Colonic mucosa (tissue), 4 donors: ENCODE measurements at regions of chr2 and their contacts with region 1.

Region 1: DNA sequence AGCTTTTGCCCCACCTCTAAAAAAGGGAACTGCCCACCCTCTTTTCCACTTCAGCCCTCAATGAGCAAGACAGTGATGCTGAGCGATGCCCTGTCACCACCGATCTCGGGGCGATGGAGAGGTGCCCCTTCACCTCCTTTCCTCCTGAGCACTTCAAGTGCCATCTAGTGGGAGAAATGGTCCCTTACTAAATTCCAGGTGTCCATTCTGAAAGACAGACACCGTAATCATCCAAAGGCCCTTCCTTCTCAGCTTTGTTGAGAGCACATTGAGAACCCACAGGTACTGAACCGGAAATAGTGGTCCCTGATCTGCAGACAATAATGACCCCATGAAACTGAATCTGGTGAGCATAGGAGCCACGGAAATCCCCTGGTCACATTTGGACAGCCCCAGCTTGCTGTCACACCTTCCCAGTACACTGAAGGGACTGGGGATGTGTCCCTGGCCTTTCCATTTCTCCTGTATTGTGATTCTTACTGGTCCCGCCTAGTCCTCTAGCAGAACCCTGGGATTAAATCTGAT is 38.5 kb downstream of the KCTD18 start:
- DNase-seq: no peak
- H3K4me3 ChIP-seq: no peak overlapping the region
- H3K27ac ChIP-seq: no peak overlapping the region
- H3K4me1 ChIP-seq: no peaks in the 10 kb centered on the region
- H3K27me3 ChIP-seq: no peaks in the 10 kb centered on the region
- CTCF ChIP-seq: peak; percentile 36

Region 2: DNA sequence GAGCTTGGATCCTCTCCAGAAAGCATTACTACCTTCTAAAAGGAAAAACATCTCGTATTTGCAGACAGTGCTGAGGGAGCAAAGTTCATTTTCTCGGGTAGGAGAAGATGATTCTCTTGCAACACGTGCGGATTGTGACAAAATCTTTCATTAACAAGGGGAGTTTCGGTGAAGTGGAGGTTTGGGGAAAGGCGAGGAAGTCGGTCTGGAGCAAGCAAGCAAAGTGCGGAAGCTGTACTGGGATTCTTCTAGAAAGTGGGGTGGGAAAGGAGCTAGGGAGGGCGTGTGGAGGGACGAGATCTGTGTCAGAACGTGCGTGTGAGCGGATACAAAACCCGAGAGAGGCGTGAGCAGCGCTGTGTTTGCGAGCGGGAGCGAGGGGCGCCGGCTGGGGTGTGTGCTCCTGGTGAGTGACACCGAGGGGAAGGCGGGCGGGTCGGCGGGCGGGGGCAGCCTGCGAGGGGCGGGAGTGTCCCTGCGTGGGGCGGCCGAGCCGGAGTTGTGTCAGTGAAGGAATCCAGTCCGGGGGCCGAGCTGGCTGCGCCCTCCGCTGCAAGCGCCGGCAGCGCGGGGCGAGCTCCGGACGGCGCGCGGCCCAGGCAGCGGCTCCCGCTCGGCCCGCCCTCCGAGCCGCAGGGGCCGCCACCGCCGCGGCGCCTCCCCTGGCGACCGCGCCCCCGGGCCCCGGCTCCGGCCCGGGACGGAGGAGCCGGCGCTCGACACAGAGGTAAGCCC is 165.0 kb before region 1 on chr2 and contains the start of gene SPATS2L:
- intact Hi-C with region 1: loop called (anchors 5 kb)
- DNase-seq: peak; percentile 82
- H3K4me3 ChIP-seq: peak within 1 kb of the TSS; percentile 78
- H3K27ac ChIP-seq: peak within 1 kb of the TSS; percentile 92
- H3K4me1 ChIP-seq: no peaks in the 10 kb centered on the region
- H3K27me3 ChIP-seq: no peaks in the 10 kb centered on the region
- CTCF ChIP-seq: no peak
- total RNA-seq, gene SPATS2L: 151 to 187 TPM